ENCODE measurements at regions of chr1 and their contacts with region 1.

Region 1: DNA sequence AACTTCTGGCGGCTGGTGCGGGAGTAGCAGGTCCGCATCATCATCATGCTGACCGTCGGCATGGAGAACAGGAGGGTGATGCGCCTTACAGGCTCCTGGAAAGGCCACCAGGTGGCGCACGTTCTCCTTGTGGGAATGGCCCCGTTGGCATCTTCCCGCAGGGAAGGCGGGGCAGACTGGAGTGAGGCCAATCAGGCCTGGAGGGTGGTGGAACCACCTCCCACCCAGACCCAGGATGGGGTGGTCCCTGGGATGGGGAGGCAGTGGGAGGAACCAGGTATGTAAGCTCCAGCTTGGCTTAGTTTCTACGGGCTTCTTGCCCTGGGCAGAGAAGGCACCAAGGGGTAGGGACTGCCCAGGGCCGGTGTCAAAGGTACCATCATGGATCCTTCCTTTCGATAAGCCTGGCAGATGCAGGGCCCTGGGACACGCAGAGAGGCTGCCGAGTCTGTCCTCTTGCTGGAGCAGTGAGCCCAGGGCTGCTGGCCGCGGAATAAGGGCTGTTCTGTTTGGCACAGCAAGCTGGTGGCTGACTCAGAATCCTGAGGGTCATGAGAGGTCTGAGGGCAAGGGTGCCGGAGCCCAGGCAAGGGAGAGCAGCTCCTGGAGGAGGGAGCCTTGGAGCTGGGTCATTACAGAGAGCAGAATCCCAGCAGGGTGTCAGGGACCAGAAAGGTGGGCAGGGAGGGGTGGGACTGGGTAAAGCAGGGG is 8.7 kb upstream of the LGR6 start:
- DNase-seq: peak; percentile 81
- H3K4me3 Mint-ChIP-seq: no peak overlapping the region
- H3K27ac Mint-ChIP-seq: no peak overlapping the region
- H3K4me1 Mint-ChIP-seq: peaks cover 8% of the 10 kb centered on the region
- H3K27me3 Mint-ChIP-seq: no peaks in the 10 kb centered on the region

Region 2: DNA sequence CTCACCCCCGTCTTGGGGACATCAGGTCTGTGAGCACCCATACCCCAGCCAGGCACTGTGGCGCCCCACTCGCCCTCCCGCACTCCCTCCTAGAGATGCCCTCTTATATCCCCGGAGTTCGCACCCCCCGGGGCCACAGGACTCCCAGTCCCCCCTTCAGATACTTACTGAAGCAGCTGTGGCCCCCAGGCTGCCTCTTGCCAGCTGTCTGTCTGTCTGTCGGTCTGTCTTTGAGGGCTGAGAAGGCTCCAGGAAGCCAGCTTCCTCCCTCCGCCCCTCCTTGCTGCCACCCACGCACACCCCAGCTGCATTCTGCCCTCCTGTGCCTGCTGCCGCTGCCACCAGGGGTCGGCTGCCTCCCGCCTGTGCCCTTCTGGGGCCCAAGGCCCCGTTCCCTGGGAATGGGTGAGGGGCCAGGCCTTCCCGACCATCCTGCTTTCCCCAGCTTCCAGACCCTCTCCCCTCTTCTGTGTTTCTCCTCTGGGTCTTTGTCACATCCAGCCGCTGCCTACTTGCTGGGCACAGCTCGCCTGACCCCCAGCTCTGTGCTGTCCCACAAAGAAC is 24.4 kb before region 1 on chr1 and contains the start of gene PTPN7:
- CTCF ChIA-PET with region 1: interaction called, 14 read pairs
- intact Hi-C with region 1: loop called (anchors 2 kb)
- DNase-seq: peak; percentile 96
- H3K4me3 Mint-ChIP-seq: peak within 1 kb of the TSS; percentile 99
- H3K27ac Mint-ChIP-seq: peak within 1 kb of the TSS; percentile 100
- H3K4me1 Mint-ChIP-seq: peaks cover 80% of the 10 kb centered on the region
- H3K27me3 Mint-ChIP-seq: no peaks in the 10 kb centered on the region
- total RNA-seq, gene PTPN7: 112 to 119 TPM

Region 3: DNA sequence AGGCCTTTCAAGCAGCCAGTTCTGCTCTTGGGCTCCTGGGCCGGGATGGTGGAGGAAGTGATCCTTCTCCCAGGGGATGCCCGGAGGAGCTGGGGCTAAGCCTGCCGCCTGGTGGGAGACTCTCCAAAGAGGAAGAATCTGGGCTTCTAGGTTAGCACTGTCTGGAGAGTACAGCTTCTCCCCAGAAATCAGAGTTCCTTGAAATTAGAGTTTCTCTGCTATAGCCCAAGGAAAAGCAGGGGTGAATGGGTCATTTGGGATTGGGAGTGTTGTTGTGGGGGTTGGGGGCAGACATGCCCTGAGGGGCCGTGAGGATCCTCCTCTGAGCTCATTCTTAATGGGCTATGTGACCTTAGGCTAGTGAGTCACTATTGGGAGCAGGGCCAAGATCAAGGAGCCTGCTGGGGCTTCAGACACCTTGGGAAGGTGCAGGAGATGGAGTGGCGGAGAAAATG is 15.2 kb after region 1 on chr1:
- CTCF ChIA-PET with region 1: interaction called, 14 read pairs
- intact Hi-C with region 1: no loop called
- DNase-seq: no peak
- H3K4me3 Mint-ChIP-seq: no peak overlapping the region
- H3K27ac Mint-ChIP-seq: no peak overlapping the region
- H3K4me1 Mint-ChIP-seq: peaks cover 16% of the 10 kb centered on the region
- H3K27me3 Mint-ChIP-seq: peaks cover 9% of the 10 kb centered on the region

Region 4: DNA sequence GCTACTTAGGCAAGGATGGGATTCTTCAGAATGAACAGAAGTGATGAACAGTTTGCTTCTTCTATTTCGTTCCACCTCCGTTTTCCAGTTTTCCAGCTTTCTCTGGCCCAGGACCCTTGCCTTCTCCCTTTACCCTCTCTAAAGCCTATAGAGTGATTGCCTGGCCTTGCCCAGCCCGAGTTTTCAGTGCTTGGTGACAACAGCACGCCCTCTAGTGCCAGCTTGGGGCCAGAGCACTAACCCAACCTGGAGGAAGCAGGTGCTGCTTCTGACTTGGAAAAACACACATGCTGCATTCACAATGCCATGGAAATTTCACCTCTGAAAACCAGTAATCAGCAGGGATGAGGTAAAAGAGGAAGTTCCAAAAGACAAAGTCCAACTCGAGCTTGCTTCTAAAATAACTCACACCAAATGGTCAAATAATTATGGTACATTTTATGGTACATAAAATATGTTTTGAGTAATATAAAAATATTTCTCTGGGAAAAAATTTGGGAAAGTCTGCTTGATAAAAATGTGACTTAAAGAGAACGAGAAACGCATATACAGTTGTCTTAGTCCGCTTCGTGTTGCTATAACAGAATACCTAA is 130.8 kb after region 1 on chr1:
- CTCF ChIA-PET with region 1: interaction called, 39 read pairs
- intact Hi-C with region 1: loop called (anchors 1 kb)
- DNase-seq: peak; percentile 89
- H3K4me3 Mint-ChIP-seq: no peak overlapping the region
- H3K27ac Mint-ChIP-seq: no peak overlapping the region
- H3K4me1 Mint-ChIP-seq: peaks cover 2% of the 10 kb centered on the region
- H3K27me3 Mint-ChIP-seq: no peaks in the 10 kb centered on the region

Measured in activated naive CD4-positive, alpha-beta T cell treated with anti-CD3 and anti-CD28 coated beads for 36 hours (primary cell).